ENCODE measurements at regions of chr1 and their contacts with region 1.

Region 1: DNA sequence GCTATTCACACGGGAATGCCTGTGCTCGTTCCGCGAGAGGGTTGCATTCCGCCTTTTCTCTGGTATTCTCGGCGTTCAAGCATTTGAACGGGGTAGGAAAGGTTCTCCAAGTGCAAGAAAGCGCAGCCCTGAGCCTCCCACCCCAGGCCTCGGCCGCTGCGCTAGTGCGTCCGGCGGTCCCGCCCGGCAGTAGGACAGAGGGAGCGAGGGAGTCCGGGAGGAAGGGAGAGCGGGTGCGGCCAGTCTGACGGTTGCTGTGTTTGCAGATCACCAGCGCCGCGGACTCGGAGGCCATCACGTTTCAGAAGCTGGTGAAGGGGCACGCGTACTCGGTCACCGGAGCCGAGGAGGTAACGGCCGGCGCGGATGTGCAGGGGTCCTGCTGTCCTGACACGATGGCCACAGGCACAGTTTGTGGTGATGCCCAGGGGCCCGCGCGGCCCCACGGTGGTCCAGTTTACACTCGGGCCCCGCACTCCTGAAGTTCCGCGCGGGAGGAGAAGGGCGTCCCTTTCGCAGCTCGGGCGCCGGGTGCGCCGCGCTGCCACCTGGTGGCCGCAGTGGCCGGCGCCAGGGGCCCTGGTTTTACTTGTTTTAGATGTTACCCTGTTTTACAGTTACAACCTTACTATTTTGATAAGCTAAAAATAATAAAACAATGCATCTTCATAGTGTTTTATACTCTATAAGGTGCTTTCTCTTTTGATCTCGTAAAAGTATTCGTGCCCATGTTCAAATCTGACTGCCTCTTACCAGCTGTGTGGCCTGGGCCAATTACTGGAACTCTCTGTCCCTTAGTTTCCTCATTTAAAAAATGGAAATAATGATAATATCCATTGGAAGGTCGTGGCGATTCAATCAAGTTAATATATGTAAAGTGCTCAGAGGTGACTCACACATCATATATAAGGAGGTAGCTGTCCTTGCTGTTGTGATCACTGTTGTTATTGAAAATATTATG is 36.7 kb downstream of the CAPN2 start:
- DNase-seq: peak; percentile 44

Region 2: GRCh38 chr1:223831755-223832636 is 82.9 kb after region 1 on chr1:
- in situ Hi-C with region 1: no loop called
- DNase-seq: peak; percentile 29

Region 3: GRCh38 chr1:224329842-224330753 is 581.0 kb after region 1 on chr1 and contains the start of gene NVL:
- in situ Hi-C with region 1: loop called (anchors 25 kb)
- DNase-seq: peak; percentile 94

Measured in KBM-7 (cell line).